Activated naive CD4-positive, alpha-beta T cell treated with anti-CD3 and anti-CD28 coated beads, Interleukin-2, amount 10 ng/mL, durations not matched to agents 7 days and 5 days (primary cell): ENCODE measurements at regions of chr9 and their contacts with region 1.

Region 1: DNA sequence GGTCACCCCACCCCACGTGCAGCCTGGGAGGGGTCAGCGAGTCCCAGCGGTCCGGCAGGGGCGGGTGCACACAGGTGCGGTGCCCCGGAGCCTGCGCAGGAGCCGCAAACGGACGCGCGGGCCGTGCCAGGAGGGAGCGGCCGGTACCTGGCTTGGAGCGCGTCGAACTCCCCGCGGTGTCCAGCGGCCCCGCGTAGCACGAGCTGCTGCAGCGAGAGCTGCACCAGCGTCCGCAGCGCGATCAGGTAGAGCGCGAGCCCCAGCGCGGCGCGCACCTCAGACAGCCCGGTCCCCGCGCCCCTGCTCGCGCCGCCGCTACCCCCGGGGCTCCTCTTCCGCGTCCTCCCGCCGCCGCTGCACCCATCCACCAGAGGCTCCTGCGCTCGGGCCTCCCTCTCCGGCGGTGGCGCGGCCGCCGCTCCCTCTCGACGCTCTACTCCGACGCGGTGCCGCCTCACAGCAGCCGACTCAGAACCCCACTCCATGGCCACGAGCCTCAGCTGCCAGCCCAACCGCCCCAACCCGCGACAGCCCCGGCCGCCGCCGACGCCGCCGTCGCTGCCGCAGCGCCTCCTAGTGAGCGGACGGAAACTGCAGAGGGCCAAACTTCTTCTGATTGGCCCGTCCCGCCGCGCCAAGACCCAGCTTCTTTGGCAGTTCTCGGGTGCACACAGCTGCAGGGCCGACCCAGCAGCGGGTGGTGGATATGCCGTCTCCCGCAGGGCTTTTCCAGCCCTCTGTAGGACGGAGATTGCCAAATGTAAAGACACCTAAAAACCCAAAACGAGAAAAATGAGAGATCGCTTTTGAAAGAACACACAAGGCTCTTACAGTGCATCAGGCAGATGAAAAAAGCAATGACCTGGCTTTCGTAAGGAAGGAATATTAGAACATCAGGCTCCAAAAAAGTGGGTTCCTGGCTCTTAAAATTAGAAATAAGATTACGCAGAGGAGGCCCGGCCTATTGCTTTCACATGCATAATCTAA is at the start of gene ERMP1:
- DNase-seq: peak; percentile 91
- H3K4me3 Mint-ChIP-seq: peak within 1 kb of the TSS; percentile 93
- H3K27ac Mint-ChIP-seq: peak within 1 kb of the TSS; percentile 90
- H3K4me1 Mint-ChIP-seq: peaks cover 46% of the 10 kb centered on the region
- H3K27me3 Mint-ChIP-seq: peaks cover 9% of the 10 kb centered on the region

Region 2: GRCh38 chr9:5688109-5688508 is 144.7 kb before region 1 on chr9:
- CTCF ChIA-PET with region 1: no interaction called
- DNase-seq: no peak
- H3K4me3 Mint-ChIP-seq: no peak overlapping the region
- H3K27ac Mint-ChIP-seq: no peak overlapping the region
- H3K4me1 Mint-ChIP-seq: no peaks in the 10 kb centered on the region
- H3K27me3 Mint-ChIP-seq: no peaks in the 10 kb centered on the region

Region 3: GRCh38 chr9:5843794-5844504 is 11.1 kb after region 1 on chr9:
- CTCF ChIA-PET with region 1: interaction called, 21 read pairs
- DNase-seq: peak; percentile 27
- H3K4me3 Mint-ChIP-seq: peak overlapping the region; percentile 68
- H3K27ac Mint-ChIP-seq: peak overlapping the region; percentile 98
- H3K4me1 Mint-ChIP-seq: peaks cover 92% of the 10 kb centered on the region
- H3K27me3 Mint-ChIP-seq: no peaks in the 10 kb centered on the region

Region 4: GRCh38 chr9:5851445-5851844 is 18.6 kb after region 1 on chr9:
- CTCF ChIA-PET with region 1: interaction called, 10 read pairs
- DNase-seq: peak; percentile 50
- H3K4me3 Mint-ChIP-seq: no peak overlapping the region
- H3K27ac Mint-ChIP-seq: peak overlapping the region; percentile 73
- H3K4me1 Mint-ChIP-seq: peaks cover 69% of the 10 kb centered on the region
- H3K27me3 Mint-ChIP-seq: no peaks in the 10 kb centered on the region